HCT116 (cell line): ENCODE measurements at regions of chr6 and their contacts with region 1.

Region 1: GRCh38 chr6:106223300-106223930 is 102.1 kb downstream of the ATG5 start:
- DNase-seq: peak; percentile 72
- ATAC-seq: peak; percentile 85
- H3K4me3 ChIP-seq: no peak overlapping the region
- H3K27ac ChIP-seq: no peak overlapping the region
- H3K4me1 ChIP-seq: no peaks in the 10 kb centered on the region
- H3K27me3 ChIP-seq: no peaks in the 10 kb centered on the region
- CTCF ChIP-seq: peak; percentile 60 to 80 (median 62)
- POLR2A ChIP-seq: no peak
- RAD21 ChIP-seq: peak; percentile 89

Region 2: DNA sequence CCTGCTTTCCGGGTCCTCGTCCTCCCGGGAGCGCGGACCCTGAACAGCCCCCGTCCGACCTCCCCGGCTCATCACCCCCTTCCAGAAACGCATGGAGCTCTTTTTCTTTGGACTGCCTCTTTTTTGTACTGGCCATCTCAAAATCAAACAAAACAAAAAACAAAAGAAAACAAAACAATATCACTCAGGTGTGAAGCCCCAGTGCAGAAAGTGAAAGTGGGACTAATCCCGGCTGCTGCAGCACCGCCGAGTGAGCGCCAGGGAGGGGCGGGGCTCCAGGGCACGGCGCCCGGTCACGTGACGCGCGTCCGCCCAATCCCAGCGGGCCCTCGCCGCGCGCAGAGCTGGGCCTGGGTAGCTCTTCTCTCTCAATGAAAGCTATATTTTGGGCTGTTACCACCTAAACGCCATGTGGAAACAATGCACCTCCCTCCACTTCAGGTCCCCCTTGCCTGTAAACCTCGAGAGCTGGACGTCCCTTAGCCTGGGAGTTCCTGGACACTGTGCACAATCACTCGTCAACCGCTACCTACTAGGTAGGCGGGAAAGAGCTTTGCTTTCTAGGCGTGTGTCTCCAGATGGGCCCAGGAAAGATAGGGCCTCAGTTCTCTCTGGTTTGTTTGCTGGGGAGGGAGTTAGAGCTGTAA is 231.0 kb before region 1 on chr6:
- CTCF ChIA-PET with region 1: no interaction called
- POLR2A ChIA-PET with region 1: no interaction called
- RAD21 ChIA-PET with region 1: no interaction called
- intact Hi-C with region 1: loop called (anchors 5 kb)
- DNase-seq: no peak
- ATAC-seq: peak; percentile 82
- H3K4me3 ChIP-seq: peak overlapping the region; percentile 47 to 60
- H3K27ac ChIP-seq: no peak overlapping the region
- H3K4me1 ChIP-seq: peaks cover 0 to 34% of the 10 kb centered on the region in 2 experiments; a peak in 2 of 4 replicates
- H3K27me3 ChIP-seq: no peaks in the 10 kb centered on the region
- CTCF ChIP-seq: no peak
- POLR2A ChIP-seq: no peak
- RAD21 ChIP-seq: no peak

Region 3: DNA sequence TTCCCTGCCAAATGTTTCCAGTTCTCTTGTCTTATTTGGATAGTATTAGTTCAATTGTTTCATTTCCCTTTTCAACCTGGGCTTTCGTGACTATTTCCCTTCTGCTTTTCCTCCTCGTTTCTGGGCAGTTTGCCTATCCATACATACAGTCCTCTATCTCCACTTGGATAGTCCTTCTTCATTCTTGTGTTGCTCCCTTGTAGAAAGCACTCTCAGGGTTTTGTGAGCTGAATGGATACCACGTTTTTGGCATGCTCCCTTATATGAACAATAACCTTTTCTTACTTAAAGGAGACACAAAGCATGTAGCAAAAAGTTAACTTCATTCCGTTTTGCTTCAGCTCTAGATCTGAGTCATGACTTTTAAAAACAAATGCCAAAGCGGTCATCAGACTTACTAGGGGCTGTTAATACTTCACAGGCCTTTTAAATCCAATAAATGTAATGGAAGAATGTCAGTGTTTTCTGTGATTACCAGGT is 153.7 kb after region 1 on chr6:
- CTCF ChIA-PET with region 1: no interaction called
- POLR2A ChIA-PET with region 1: no interaction called
- RAD21 ChIA-PET with region 1: no interaction called
- intact Hi-C with region 1: no loop called
- DNase-seq: no peak
- ATAC-seq: no peak
- H3K4me3 ChIP-seq: no peak overlapping the region
- H3K27ac ChIP-seq: no peak overlapping the region
- H3K4me1 ChIP-seq: peaks cover 10 to 44% of the 10 kb centered on the region in 2 experiments
- H3K27me3 ChIP-seq: no peaks in the 10 kb centered on the region
- CTCF ChIP-seq: no peak
- POLR2A ChIP-seq: no peak
- RAD21 ChIP-seq: no peak

Region 4: GRCh38 chr6:106510090-106510970 is 286.9 kb after region 1 on chr6:
- CTCF ChIA-PET with region 1: no interaction called
- POLR2A ChIA-PET with region 1: no interaction called
- RAD21 ChIA-PET with region 1: no interaction called
- intact Hi-C with region 1: no loop called
- DNase-seq: no peak
- ATAC-seq: peak; percentile 77
- H3K4me3 ChIP-seq: peak overlapping the region; percentile 46 to 62
- H3K27ac ChIP-seq: no peak overlapping the region
- H3K4me1 ChIP-seq: peaks cover 8 to 29% of the 10 kb centered on the region in 2 experiments
- H3K27me3 ChIP-seq: no peaks in the 10 kb centered on the region
- CTCF ChIP-seq: 0 out of 6 replicates have a peak, but pooled peaks of 1 of the 3 experiments have one; percentile 3
- POLR2A ChIP-seq: no peak
- RAD21 ChIP-seq: no peak